HCT116 (cell line): ENCODE measurements at regions of chr13 and their contacts with region 1.

Region 1: GRCh38 chr13:51070005-51070649 is 40.9 kb downstream of the C13orf42 start:
- DNase-seq: peak; percentile 62
- ATAC-seq: peak; percentile 98
- H3K4me3 ChIP-seq: no peak overlapping the region
- H3K27ac ChIP-seq: no peak overlapping the region
- H3K4me1 ChIP-seq: peaks cover 0 to 4% of the 10 kb centered on the region in 2 experiments; a peak in 2 of 4 replicates
- H3K27me3 ChIP-seq: no peaks in the 10 kb centered on the region
- CTCF ChIP-seq: peak; percentile 72 to 98 (median 94)
- POLR2A ChIP-seq: no peak
- RAD21 ChIP-seq: peak; percentile 95

Region 2: GRCh38 chr13:49652355-49653305 is 1417.5 kb before region 1 on chr13:
- CTCF ChIA-PET with region 1: no interaction called
- POLR2A ChIA-PET with region 1: no interaction called
- RAD21 ChIA-PET with region 1: no interaction called
- intact Hi-C with region 1: loop called (anchors 5 kb)
- DNase-seq: peak; percentile 26
- ATAC-seq: peak; percentile 95
- H3K4me3 ChIP-seq: no peak overlapping the region
- H3K27ac ChIP-seq: no peak overlapping the region
- H3K4me1 ChIP-seq: no peaks in the 10 kb centered on the region
- H3K27me3 ChIP-seq: no peaks in the 10 kb centered on the region
- CTCF ChIP-seq: peak; percentile 50 to 68 (median 64); a peak in 5 of 6 replicates
- POLR2A ChIP-seq: no peak
- RAD21 ChIP-seq: peak; percentile 62

Region 3: DNA sequence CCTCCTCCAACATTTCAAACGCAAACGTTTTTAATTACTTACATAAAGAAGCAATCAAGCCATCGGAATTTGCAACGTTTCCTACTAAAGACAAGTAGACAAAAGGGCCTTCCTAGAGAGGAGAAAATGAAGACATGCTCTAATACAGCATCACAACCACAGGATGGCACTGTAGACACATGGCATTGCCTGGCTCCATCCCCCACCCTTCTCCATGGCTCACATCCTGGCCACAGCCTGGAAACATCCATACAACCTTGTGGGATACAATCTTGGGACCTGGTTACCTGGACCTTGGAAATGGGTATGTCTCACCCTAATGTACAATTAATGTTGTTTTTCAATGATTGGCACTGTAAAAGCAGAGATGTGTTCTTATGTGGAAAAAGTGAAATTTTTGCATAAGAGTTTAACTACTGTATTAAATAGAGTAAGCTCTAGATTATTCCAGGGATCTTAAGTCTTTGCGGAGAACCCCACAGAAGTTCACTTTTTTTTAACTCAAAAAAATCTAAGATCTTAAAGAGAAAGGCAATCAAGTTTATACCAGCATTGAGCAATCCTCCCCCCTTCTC is 1400.3 kb before region 1 on chr13:
- CTCF ChIA-PET with region 1: interaction called, 3 read pairs
- POLR2A ChIA-PET with region 1: no interaction called
- RAD21 ChIA-PET with region 1: no interaction called
- intact Hi-C with region 1: loop called (anchors 1 kb)
- DNase-seq: peak; percentile 63
- ATAC-seq: peak; percentile 99
- H3K4me3 ChIP-seq: no peak overlapping the region
- H3K27ac ChIP-seq: no peak overlapping the region
- H3K4me1 ChIP-seq: peaks cover 0 to 11% of the 10 kb centered on the region in 2 experiments; a peak in 2 of 4 replicates
- H3K27me3 ChIP-seq: no peaks in the 10 kb centered on the region
- CTCF ChIP-seq: peak; percentile 74 to 92 (median 81)
- POLR2A ChIP-seq: no peak
- RAD21 ChIP-seq: peak; percentile 94

Region 4: GRCh38 chr13:49840266-49840665 is 1229.9 kb before region 1 on chr13:
- CTCF ChIA-PET with region 1: no interaction called
- POLR2A ChIA-PET with region 1: no interaction called
- RAD21 ChIA-PET with region 1: no interaction called
- intact Hi-C with region 1: loop called (anchors 10 kb)
- DNase-seq: no peak
- ATAC-seq: no peak; the same call in 1 of the 2 replicates
- H3K4me3 ChIP-seq: no peak overlapping the region
- H3K27ac ChIP-seq: no peak overlapping the region
- H3K4me1 ChIP-seq: peaks cover 0 to 7% of the 10 kb centered on the region in 2 experiments; a peak in 1 of 4 replicates
- H3K27me3 ChIP-seq: no peaks in the 10 kb centered on the region
- CTCF ChIP-seq: no peak
- POLR2A ChIP-seq: no peak
- RAD21 ChIP-seq: no peak

Region 5: GRCh38 chr13:49976314-49977258 is 1093.5 kb before region 1 on chr13:
- CTCF ChIA-PET with region 1: interaction called, 4 read pairs
- POLR2A ChIA-PET with region 1: no interaction called
- RAD21 ChIA-PET with region 1: no interaction called
- intact Hi-C with region 1: loop called (anchors 1 kb)
- DNase-seq: peak; percentile 47
- ATAC-seq: peak; percentile 94
- H3K4me3 ChIP-seq: no peak overlapping the region
- H3K27ac ChIP-seq: no peak overlapping the region
- H3K4me1 ChIP-seq: no peaks in the 10 kb centered on the region
- H3K27me3 ChIP-seq: no peaks in the 10 kb centered on the region
- CTCF ChIP-seq: peak; percentile 59 to 97 (median 91); a peak in 5 of 6 replicates
- POLR2A ChIP-seq: no peak
- RAD21 ChIP-seq: peak; percentile 93

Region 6: DNA sequence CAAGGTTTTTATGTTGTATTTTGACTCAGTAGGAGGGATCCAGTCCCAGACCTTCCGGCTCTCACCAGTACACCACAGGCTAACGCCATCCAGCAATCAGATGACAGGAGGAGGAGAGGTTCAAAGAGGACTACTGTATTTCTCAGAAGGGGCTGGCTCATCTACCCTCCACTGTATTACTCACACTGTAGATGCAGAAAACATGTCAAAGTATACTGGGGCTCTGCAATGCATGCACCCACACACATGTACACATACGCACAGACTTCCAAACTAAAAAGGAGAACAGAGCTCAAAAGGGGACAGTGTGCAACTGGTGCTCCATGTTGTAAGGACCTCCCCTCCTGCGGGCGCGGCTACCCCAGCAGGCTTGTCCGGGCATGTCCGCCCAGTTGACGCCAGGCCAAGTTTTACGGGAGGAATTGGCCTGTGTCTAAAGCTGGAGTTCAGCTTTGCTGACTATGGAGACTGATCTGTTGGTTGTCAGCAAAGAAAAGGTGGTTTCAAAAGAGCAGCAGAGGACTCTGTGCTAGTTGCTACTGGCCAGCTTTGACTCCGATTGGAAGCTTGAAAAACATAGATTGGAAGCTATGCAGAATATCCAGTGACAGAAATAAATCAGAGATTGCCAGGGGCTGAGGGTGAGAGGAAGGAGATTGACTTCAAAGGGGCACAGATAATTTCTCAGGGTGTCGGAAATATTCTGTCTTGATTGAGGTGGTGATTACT is 540.8 kb before region 1 on chr13:
- CTCF ChIA-PET with region 1: no interaction called
- POLR2A ChIA-PET with region 1: no interaction called
- RAD21 ChIA-PET with region 1: no interaction called
- intact Hi-C with region 1: loop called (anchors 10 kb)
- DNase-seq: peak; percentile 65
- ATAC-seq: peak; percentile 94
- H3K4me3 ChIP-seq: peak overlapping the region; percentile 7 to 41; a peak in 3 of 4 replicates
- H3K27ac ChIP-seq: peak overlapping the region; percentile 92
- H3K4me1 ChIP-seq: peaks cover 29 to 32% of the 10 kb centered on the region in 2 experiments
- H3K27me3 ChIP-seq: no peaks in the 10 kb centered on the region
- CTCF ChIP-seq: no peak
- POLR2A ChIP-seq: no peak
- RAD21 ChIP-seq: no peak

Region 7: GRCh38 chr13:50911937-50912795 is 158.0 kb before region 1 on chr13:
- CTCF ChIA-PET with region 1: no interaction called
- POLR2A ChIA-PET with region 1: no interaction called
- RAD21 ChIA-PET with region 1: no interaction called
- intact Hi-C with region 1: loop called (anchors 5 kb)
- DNase-seq: peak; percentile 80
- ATAC-seq: peak; percentile 18; the same call in 1 of the 2 replicates
- H3K4me3 ChIP-seq: no peak overlapping the region
- H3K27ac ChIP-seq: no peak overlapping the region
- H3K4me1 ChIP-seq: peaks cover 12 to 25% of the 10 kb centered on the region in 2 experiments; a peak in 3 of 4 replicates
- H3K27me3 ChIP-seq: no peaks in the 10 kb centered on the region
- CTCF ChIP-seq: peak; percentile 63 to 88 (median 87); a peak in 5 of 6 replicates
- POLR2A ChIP-seq: no peak
- RAD21 ChIP-seq: peak; percentile 81

Region 8: GRCh38 chr13:51397262-51397941 is 327.3 kb after region 1 on chr13:
- CTCF ChIA-PET with region 1: no interaction called
- POLR2A ChIA-PET with region 1: no interaction called
- RAD21 ChIA-PET with region 1: no interaction called
- intact Hi-C with region 1: no loop called
- DNase-seq: no peak
- ATAC-seq: no peak
- H3K4me3 ChIP-seq: no peak overlapping the region
- H3K27ac ChIP-seq: no peak overlapping the region
- H3K4me1 ChIP-seq: no peaks in the 10 kb centered on the region
- H3K27me3 ChIP-seq: no peaks in the 10 kb centered on the region
- CTCF ChIP-seq: no peak
- POLR2A ChIP-seq: no peak
- RAD21 ChIP-seq: no peak